CD4-positive, alpha-beta T cell (primary cell): ENCODE measurements at regions of chr1 and their contacts with region 1.

Region 1: GRCh38 chr1:228082135-228082891 is at the start of gene ARF1:
- DNase-seq: peak; percentile 81 to 97 (median 93)
- ATAC-seq: peak; percentile 84
- H3K4me3 ChIP-seq: peak within 1 kb of the TSS; percentile 80
- H3K4me3 Mint-ChIP-seq: peak within 1 kb of the TSS; percentile 97
- H3K27ac ChIP-seq: peak within 1 kb of the TSS; percentile 86 to 89
- H3K27ac Mint-ChIP-seq: peak within 1 kb of the TSS; percentile 99
- H3K4me1 ChIP-seq: peaks cover 62% of the 10 kb centered on the region
- H3K4me1 Mint-ChIP-seq: peaks cover 53% of the 10 kb centered on the region
- H3K27me3 ChIP-seq: no peaks in the 10 kb centered on the region
- H3K27me3 Mint-ChIP-seq: no peaks in the 10 kb centered on the region
- CTCF ChIP-seq: no peak
- total RNA-seq, gene ARF1: 318 to 322 TPM

Region 2: DNA sequence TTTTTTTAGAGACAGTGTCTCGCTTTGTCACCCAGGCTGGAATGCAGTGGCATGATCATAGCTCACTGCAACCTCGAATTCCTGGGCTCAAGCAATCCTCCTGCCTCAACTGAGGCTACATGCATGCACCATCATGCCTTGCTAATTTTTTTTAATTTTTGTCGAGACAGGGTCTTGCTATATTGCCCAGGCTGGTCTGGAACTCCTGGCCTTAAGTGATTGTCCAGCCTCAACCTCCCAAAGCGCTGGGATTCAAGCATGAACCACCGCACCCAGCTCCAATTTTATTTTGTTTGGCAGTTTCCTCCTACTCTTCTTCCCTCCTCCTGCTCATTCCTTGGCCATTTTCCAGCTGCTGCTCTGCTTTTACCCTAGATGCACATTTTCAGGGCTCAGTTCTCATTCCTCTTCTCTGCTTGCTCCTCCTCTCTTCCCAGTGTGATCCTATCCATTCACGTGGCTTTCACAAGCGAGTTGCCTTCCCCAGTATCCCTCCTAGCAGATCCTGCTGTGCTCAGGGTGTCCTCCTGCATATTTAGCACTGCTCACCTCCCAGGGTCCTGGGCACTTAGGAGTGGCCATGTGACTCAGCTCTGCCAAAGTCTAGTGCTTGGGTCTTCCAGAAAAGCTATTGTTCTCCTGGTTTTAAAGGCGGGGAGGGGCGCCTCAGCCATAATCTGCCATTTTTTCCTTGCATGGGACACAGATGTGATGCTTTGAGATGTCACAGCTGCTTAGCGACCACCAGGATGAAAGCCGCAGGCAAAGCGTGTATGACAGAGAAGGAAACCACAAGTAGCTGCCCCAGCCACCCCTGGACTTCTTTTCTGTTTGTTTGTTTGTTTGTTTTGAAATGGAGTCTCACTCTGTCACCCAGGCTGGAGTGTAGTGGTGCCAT is 1178.2 kb before region 1 on chr1:
- CTCF ChIA-PET with region 1: no interaction called
- POLR2A ChIA-PET with region 1: no interaction called
- intact Hi-C with region 1: no loop called
- DNase-seq: no peak
- ATAC-seq: no peak
- H3K4me3 ChIP-seq: no peak overlapping the region
- H3K4me3 Mint-ChIP-seq: no peak overlapping the region
- H3K27ac ChIP-seq: no peak overlapping the region
- H3K27ac Mint-ChIP-seq: no peak overlapping the region
- H3K4me1 ChIP-seq: no peaks in the 10 kb centered on the region
- H3K4me1 Mint-ChIP-seq: no peaks in the 10 kb centered on the region
- H3K27me3 ChIP-seq: no peaks in the 10 kb centered on the region
- H3K27me3 Mint-ChIP-seq: no peaks in the 10 kb centered on the region
- CTCF ChIP-seq: no peak

Region 3: GRCh38 chr1:227563324-227564201 is 518.8 kb before region 1 on chr1 and contains the start of gene ZNF678:
- CTCF ChIA-PET with region 1: no interaction called
- POLR2A ChIA-PET with region 1: no interaction called
- intact Hi-C with region 1: loop called in 1 of 2 experiments (anchors 5 kb)
- DNase-seq: peak; percentile 70 to 94 (median 80)
- ATAC-seq: peak; percentile 94
- H3K4me3 ChIP-seq: peak within 1 kb of the TSS; percentile 88
- H3K4me3 Mint-ChIP-seq: peak within 1 kb of the TSS; percentile 94
- H3K27ac ChIP-seq: peak within 1 kb of the TSS; percentile 52 to 78
- H3K27ac Mint-ChIP-seq: peak within 1 kb of the TSS; percentile 87
- H3K4me1 ChIP-seq: peaks cover 37% of the 10 kb centered on the region
- H3K4me1 Mint-ChIP-seq: peaks cover 45% of the 10 kb centered on the region
- H3K27me3 ChIP-seq: peaks cover 15 to 34% of the 10 kb centered on the region in 2 experiments
- H3K27me3 Mint-ChIP-seq: peaks cover 35% of the 10 kb centered on the region
- CTCF ChIP-seq: no peak
- total RNA-seq, gene ZNF678: 2.8 to 2.9 TPM

Region 4: DNA sequence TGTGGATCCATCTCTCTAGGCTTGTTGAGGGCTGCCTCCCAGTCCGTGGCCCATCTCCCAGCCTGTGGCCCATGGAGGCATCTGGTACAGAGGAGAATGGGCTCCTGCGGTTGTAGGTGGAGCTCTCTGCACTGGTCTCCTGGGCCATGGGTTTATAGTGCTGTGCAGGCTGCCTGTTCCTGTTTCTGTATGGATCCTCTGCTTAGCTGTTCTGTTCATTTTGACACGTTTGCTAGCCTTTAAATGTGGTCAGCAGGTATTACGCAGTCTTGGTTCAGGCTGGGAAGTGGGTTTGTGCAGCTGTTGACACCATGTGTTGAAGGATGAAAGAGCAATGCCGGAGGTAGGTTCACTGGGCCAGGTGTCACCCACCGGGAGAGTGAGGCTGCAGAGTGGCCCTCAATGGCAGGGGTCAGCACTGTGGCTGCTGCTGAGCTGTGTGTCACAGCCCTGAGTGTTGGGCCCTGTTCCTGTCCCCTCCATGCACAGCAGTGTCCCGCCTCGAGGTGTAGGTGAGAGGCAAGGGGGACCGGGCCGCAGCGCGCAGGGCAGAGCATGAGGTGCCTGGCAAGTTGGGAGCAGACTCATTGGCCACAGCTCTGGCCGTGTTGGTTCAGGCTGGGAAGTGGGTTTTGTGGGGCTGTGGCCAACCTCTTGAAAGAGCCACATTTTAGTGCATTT is 308.1 kb before region 1 on chr1:
- CTCF ChIA-PET with region 1: no interaction called
- POLR2A ChIA-PET with region 1: no interaction called
- intact Hi-C with region 1: no loop called
- DNase-seq: peak in 5 of 14 experiments; percentile 17 to 78 (median 63)
- ATAC-seq: peak; percentile 93
- H3K4me3 ChIP-seq: no peak overlapping the region
- H3K4me3 Mint-ChIP-seq: peak overlapping the region; percentile 26
- H3K27ac ChIP-seq: no peak overlapping the region
- H3K27ac Mint-ChIP-seq: peak overlapping the region; percentile 82
- H3K4me1 ChIP-seq: peaks cover 20% of the 10 kb centered on the region
- H3K4me1 Mint-ChIP-seq: peaks cover 23% of the 10 kb centered on the region
- H3K27me3 ChIP-seq: no peaks in the 10 kb centered on the region
- H3K27me3 Mint-ChIP-seq: no peaks in the 10 kb centered on the region
- CTCF ChIP-seq: no peak

Region 5: DNA sequence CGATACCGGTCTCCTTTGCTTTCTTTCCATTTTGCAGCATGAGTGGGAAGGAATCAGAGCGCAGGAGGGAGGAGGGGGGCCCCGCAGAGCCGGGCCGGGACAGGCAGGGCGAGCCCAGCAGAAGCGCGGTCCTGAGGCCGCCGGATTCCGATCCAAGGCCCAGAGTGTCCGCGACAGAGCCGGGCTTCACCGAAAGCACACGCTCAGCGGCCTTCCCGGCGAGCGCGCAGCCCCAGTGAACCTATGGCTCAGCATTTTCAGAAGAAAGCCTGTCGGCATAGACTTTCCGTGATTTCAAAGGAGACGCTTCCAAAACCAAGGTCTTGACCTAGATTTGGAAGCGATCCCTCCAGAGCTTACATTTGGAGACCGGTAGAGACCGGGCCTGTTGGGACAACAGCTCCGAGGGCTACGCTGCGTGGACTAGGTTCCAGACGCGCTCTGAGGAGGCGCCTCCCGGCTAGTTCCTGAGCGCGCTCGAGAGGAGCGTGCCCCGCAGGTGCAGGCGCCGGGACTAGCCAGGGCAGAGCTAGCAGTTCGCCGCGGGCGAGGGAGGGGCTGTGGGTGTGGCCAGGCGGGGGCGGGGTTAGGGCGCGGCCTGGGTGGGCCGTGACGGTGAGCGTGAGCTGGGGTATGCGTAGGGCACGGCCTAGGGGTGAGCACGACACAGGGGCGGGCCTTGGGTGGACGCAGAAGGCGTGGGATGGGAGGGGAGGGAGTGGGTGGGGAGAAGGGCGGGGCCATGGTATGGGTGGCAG is 294.6 kb before region 1 on chr1:
- CTCF ChIA-PET with region 1: no interaction called
- POLR2A ChIA-PET with region 1: interaction called, 4 read pairs
- intact Hi-C with region 1: loop called (anchors 1 to 5 kb)
- DNase-seq: peak; percentile 94 to 99 (median 96)
- ATAC-seq: peak; percentile 92
- H3K4me3 ChIP-seq: peak overlapping the region; percentile 74
- H3K4me3 Mint-ChIP-seq: peak overlapping the region; percentile 89
- H3K27ac ChIP-seq: peak overlapping the region in 1 of 2 donors; percentile 11
- H3K27ac Mint-ChIP-seq: peak overlapping the region; percentile 82
- H3K4me1 ChIP-seq: peaks cover 39% of the 10 kb centered on the region
- H3K4me1 Mint-ChIP-seq: peaks cover 34% of the 10 kb centered on the region
- H3K27me3 ChIP-seq: no peaks in the 10 kb centered on the region
- H3K27me3 Mint-ChIP-seq: no peaks in the 10 kb centered on the region
- CTCF ChIP-seq: no peak

Region 6: DNA sequence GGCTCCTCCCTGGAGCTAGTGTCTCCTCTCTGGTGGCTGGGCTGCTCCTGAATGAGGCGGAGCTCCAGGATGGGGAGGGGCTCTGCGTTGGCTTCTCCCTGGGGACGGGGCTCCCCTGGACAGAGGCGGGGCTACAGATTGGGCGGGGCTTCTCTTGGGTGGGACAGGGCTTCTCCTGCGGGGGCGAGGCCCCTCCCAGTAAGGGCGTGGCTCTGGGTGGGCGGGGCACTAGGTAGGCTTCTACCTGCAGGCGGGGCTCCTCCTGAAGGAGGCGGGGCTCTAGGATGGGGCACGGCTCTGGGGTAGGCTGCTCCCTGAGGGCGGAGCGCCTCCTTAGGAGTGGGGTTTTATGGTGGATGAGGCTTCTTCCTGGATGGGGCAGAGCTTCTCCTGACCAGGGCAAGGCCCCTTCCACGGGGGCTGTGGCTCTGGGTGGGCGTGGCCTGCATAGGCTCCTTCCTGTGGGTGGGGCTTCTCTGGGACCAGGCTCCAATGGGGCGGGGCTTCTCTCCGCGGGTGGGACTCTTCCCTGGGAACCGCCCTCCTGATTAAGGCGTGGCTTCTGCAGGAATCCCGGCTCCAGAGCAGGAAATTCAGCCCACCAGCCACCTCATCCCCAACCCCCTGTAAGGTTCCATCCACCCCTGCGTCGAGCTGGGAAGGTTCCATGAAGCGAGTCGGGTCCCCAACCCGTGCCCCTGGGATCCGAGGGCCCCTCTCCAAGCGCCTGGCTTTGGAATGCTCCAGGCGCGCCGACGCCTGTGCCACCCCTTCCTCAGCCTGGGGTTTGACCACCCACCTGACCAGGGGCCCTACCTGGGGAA is 22.5 kb before region 1 on chr1:
- CTCF ChIA-PET with region 1: no interaction called
- POLR2A ChIA-PET with region 1: interaction called, 11 read pairs
- intact Hi-C with region 1: no loop called
- DNase-seq: peak; percentile 30 to 83 (median 59)
- ATAC-seq: peak; percentile 48
- H3K4me3 ChIP-seq: peak overlapping the region; percentile 49
- H3K4me3 Mint-ChIP-seq: peak overlapping the region; percentile 74
- H3K27ac ChIP-seq: no peak overlapping the region
- H3K27ac Mint-ChIP-seq: peak overlapping the region; percentile 62
- H3K4me1 ChIP-seq: peaks cover 27% of the 10 kb centered on the region
- H3K4me1 Mint-ChIP-seq: peaks cover 6% of the 10 kb centered on the region
- H3K27me3 ChIP-seq: peaks cover 40 to 58% of the 10 kb centered on the region in 2 experiments
- H3K27me3 Mint-ChIP-seq: peaks cover 51% of the 10 kb centered on the region
- CTCF ChIP-seq: no peak

Region 7: GRCh38 chr1:228097328-228098081 is 15.2 kb after region 1 on chr1:
- CTCF ChIA-PET with region 1: interaction called, 6 read pairs
- POLR2A ChIA-PET with region 1: interaction called, 44 read pairs
- intact Hi-C with region 1: loop called in 1 of 2 experiments (anchors 2 kb)
- DNase-seq: peak in 1 of 14 experiments; percentile 22
- ATAC-seq: no peak
- H3K4me3 ChIP-seq: no peak overlapping the region
- H3K4me3 Mint-ChIP-seq: peak overlapping the region; percentile 38
- H3K27ac ChIP-seq: no peak overlapping the region
- H3K27ac Mint-ChIP-seq: peak overlapping the region; percentile 59
- H3K4me1 ChIP-seq: peaks cover 58% of the 10 kb centered on the region
- H3K4me1 Mint-ChIP-seq: peaks cover 42% of the 10 kb centered on the region
- H3K27me3 ChIP-seq: no peaks in the 10 kb centered on the region
- H3K27me3 Mint-ChIP-seq: no peaks in the 10 kb centered on the region
- CTCF ChIP-seq: no peak

Region 8: DNA sequence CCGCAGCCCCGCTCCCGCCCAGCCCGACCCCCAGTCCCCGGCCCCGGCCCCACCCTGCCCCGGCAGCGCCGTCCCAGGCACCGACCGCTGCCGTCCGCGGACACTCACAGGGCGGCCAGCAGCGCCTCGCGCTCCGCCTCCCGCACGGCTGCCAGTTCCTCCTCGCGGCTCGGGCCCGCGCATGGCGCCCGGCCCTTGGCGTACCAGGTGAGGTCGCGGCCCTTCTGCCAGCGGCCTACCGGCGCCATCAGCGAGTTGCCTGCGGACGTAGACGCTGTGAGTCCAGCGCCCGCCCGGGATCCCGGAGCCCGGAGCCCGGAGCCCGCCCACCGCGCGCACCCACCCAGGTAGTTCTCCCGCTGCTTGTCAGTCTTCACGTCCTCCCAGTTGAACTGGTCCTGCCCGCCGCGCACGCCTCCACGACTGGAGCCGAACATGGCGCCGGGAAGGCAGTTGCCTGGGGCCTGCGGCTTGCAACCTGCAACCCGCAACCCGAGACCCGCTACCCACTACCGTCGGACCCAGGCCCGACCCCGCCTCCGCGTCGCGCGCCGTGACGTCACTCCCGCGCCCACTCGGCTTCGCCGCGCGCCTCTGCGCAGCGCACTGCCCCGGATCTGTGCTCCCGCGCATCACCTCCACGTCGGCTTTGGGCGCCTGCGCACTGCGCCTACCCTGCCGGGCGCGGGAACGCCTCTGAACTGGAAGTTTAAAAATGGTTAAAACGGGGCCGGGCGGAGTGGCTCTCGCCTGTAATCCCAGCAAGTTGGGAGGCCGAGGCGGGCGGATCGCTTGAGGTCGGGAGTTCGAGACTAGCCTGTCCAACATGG is 20.7 kb after region 1 on chr1 and contains the start of gene C1orf35:
- CTCF ChIA-PET with region 1: interaction called, 6 read pairs
- POLR2A ChIA-PET with region 1: interaction called, 44 read pairs
- intact Hi-C with region 1: loop called (anchors 1 to 2 kb)
- DNase-seq: peak; percentile 87 to 96 (median 92)
- ATAC-seq: peak; percentile 78
- H3K4me3 ChIP-seq: peak within 1 kb of the TSS; percentile 83
- H3K4me3 Mint-ChIP-seq: peak within 1 kb of the TSS; percentile 96
- H3K27ac ChIP-seq: peak within 1 kb of the TSS; percentile 77 to 87
- H3K27ac Mint-ChIP-seq: peak within 1 kb of the TSS; percentile 97
- H3K4me1 ChIP-seq: peaks cover 37% of the 10 kb centered on the region
- H3K4me1 Mint-ChIP-seq: peaks cover 33% of the 10 kb centered on the region
- H3K27me3 ChIP-seq: no peaks in the 10 kb centered on the region
- H3K27me3 Mint-ChIP-seq: no peaks in the 10 kb centered on the region
- CTCF ChIP-seq: no peak
- total RNA-seq, gene C1orf35: 36.6 to 40.3 TPM

Region 9: GRCh38 chr1:228139944-228140656 is 57.8 kb after region 1 on chr1 and contains the start of gene GUK1:
- CTCF ChIA-PET with region 1: no interaction called
- POLR2A ChIA-PET with region 1: interaction called, 12 read pairs
- intact Hi-C with region 1: loop called (anchors 1 to 2 kb)
- DNase-seq: peak; percentile 99 to 100 (median 100)
- ATAC-seq: peak; percentile 88
- H3K4me3 ChIP-seq: peak within 1 kb of the TSS; percentile 78
- H3K4me3 Mint-ChIP-seq: peak within 1 kb of the TSS; percentile 90
- H3K27ac ChIP-seq: peak within 1 kb of the TSS; percentile 92 to 97
- H3K27ac Mint-ChIP-seq: peak within 1 kb of the TSS; percentile 94
- H3K4me1 ChIP-seq: peaks cover 51% of the 10 kb centered on the region
- H3K4me1 Mint-ChIP-seq: peaks cover 44% of the 10 kb centered on the region
- H3K27me3 ChIP-seq: no peaks in the 10 kb centered on the region
- H3K27me3 Mint-ChIP-seq: no peaks in the 10 kb centered on the region
- CTCF ChIP-seq: no peak
- total RNA-seq, gene GUK1: 373 to 378 TPM